Caco-2 (cell line): ENCODE measurements at regions of chr21 and their contacts with region 1.

Region 1: DNA sequence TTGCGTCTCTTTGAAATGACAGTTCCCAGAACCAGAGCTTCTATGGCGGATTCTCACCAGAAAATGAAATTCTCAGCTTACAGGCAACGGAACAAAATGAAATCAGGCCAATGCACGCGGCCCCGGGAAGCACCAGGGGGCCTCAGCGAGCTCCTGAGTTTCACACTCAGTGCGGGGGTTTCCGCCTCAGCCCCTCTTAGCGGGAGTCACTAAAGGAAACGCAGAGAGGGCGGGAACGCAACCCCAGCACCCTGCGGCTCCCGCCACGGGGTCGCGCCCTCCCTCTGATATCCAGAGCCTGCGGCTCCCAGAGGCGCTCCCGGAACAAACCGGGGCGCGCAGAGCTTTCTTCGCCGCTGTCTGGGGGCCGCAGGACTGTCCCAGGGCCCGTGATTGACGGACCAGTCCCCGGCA is 7.9 kb upstream of the COL6A1 start:
- DNase-seq: peak; percentile 69 to 75
- H3K4me3 ChIP-seq: peak overlapping the region; percentile 38
- H3K4me3 Mint-ChIP-seq: peak overlapping the region; percentile 76
- H3K27ac Mint-ChIP-seq: no peak overlapping the region
- H3K4me1 ChIP-seq: peaks cover 10% of the 10 kb centered on the region
- H3K4me1 Mint-ChIP-seq: no peaks in the 10 kb centered on the region
- H3K27me3 ChIP-seq: no peaks in the 10 kb centered on the region; the same call in 1 of the 2 replicates
- H3K27me3 Mint-ChIP-seq: peaks cover 2% of the 10 kb centered on the region
- CTCF ChIP-seq: peak; percentile 69 to 83

Region 2: DNA sequence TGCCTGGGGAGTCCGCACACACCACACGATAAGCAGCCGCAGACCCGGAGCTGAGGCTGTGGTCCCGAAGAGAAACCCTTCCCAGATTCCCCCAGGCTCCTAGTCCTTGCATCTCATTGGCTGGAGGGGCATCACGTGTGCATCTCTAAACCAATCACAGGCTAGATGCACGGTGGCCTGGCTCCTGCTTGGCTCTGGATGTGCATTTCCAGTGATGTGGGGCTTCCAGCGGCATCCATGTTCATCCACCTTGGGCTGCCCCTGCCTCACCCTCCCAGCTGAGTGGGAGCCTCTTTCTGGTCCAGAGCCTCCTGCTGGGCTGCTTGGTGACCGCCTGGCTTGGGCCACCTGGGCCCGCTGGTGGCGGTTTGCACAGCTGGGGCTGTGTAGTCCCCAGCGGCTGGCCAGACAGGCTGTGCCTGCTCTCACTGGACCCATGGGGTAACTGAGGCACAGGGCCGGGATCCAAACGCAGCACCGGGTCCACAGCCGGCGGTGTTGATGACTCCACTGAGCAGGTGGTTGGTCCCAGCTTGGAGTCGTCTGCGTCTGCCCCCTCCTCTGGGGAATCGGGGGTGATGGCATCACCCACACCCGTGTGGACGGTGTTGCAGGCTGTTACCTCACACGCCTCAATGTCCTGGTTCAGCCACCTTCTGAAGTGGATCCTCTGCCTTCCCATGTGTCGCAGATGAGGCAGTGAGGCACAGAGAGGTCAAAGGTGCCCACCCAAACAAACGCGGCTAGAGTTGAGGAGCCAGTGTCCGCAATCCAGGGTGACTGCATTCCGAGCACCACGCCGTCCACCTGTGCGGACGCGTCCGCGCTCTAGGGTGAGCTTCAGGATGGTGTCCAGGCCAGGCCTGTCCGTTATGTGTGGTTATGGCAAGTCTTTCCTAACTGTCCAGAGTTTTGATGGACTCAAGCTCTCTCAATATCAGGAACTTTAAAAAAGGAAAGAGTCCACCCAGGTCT is 49.2 kb after region 1 on chr21:
- CTCF ChIA-PET with region 1: no interaction called
- POLR2A ChIA-PET with region 1: no interaction called
- intact Hi-C with region 1: loop called (anchors 10 kb)
- DNase-seq: peak; percentile 55 to 66
- H3K4me3 ChIP-seq: peak overlapping the region; percentile 24; the same call in 1 of the 2 replicates
- H3K4me3 Mint-ChIP-seq: peak overlapping the region; percentile 64
- H3K27ac Mint-ChIP-seq: peak overlapping the region; percentile 55
- H3K4me1 ChIP-seq: peaks cover 44% of the 10 kb centered on the region
- H3K4me1 Mint-ChIP-seq: peaks cover 32% of the 10 kb centered on the region
- H3K27me3 ChIP-seq: no peaks in the 10 kb centered on the region
- H3K27me3 Mint-ChIP-seq: no peaks in the 10 kb centered on the region
- CTCF ChIP-seq: no peak

Region 3: DNA sequence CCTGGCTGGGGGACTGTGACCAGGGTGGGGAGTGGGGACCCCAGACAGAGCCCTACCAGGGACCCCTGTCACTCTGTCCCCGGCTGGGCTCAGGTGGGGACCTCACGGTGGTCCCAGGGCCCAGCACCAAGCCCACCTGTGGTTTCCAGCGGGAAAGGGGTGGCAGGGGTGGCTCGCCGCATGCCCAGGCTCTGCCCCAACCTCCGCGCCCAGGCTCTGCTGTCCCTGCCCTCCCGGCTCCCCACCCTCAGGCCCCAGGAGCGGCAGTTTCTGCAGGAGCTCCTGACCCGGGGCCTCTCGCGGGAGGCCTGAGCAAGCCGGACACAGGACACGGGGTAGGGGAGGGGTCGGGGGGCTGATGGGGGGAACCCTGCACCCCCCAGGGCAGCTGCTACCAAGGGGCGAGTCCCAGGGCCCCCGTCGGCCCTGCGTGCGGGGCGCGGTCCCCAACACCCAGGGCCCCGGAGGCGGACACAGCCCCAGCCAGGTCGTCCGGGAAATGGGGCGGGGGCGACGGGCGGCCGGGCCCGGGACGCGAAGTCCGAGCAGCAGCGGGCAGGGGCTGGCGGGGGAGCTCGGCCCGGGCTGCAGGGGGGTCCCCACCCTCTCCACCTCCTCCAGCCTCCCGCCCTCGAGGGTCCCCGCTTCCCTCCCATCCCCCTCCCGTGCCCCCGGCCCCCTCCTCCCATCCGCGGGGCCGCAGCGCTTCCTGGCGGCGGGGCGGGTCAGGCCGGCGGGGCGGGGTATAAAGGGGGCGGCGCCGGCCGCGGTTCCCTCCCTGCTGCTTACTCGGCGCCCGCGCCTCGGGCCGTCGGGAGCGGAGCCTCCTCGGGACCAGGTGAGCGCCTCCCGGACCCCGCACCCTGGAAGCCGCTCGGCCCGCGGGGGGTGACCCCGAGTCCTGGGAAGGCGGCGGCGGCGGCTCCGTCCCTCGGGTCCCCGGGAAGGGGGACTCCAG is 123.9 kb after region 1 on chr21 and contains the start of gene COL6A2:
- CTCF ChIA-PET with region 1: interaction called, 3 read pairs
- POLR2A ChIA-PET with region 1: no interaction called
- intact Hi-C with region 1: loop called (anchors 5 kb)
- DNase-seq: peak; percentile 41 to 68
- H3K4me3 ChIP-seq: peak within 1 kb of the TSS; percentile 50
- H3K4me3 Mint-ChIP-seq: peak within 1 kb of the TSS; percentile 43
- H3K27ac Mint-ChIP-seq: no peak within 1 kb of the TSS
- H3K4me1 ChIP-seq: no peaks in the 10 kb centered on the region
- H3K4me1 Mint-ChIP-seq: no peaks in the 10 kb centered on the region
- H3K27me3 ChIP-seq: no peaks in the 10 kb centered on the region; the same call in 1 of the 2 replicates
- H3K27me3 Mint-ChIP-seq: peaks cover 3% of the 10 kb centered on the region
- CTCF ChIP-seq: peak in 1 of 2 experiments; percentile 6
- total RNA-seq, gene COL6A2: 8.8 and 11.1 TPM in 2 replicates

Region 4: DNA sequence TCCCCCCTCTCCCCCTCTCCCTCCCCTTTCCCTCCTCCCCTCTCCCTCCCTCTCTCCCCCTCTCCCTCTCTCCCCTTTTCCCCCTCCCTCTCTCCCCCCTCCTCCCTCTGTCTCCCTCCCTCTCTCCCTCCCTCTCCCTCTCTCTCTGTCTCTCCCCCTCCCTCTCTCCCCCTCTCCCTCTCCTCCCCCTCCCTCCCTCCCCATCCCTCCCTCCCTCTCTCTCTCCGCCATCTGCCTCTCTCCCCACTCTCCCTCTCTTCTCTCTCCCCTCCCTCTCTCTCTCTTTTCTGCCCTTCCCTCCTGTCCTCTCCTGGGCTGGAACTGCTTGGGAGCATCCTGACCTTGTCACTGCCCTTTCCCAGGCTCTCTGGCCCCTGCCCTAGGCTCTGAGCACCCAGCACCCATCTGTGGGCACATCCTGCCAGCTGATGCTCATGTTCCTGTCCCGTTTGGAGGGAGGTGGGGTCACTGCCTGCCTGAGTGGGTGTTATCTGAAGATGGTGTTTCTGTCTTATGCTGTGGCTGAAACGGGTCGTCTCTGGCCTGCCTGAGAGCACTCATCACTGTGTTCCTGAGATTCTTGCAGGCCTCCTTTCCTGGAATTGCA is 170.9 kb after region 1 on chr21:
- CTCF ChIA-PET with region 1: interaction called, 23 read pairs
- POLR2A ChIA-PET with region 1: no interaction called
- intact Hi-C with region 1: loop called (anchors 5 kb)
- DNase-seq: no peak
- H3K4me3 ChIP-seq: no peak overlapping the region
- H3K4me3 Mint-ChIP-seq: peak overlapping the region; percentile 82
- H3K27ac Mint-ChIP-seq: peak overlapping the region; percentile 59
- H3K4me1 ChIP-seq: peaks cover 10% of the 10 kb centered on the region; the same call in 1 of the 2 replicates
- H3K4me1 Mint-ChIP-seq: peaks cover 12% of the 10 kb centered on the region
- H3K27me3 ChIP-seq: no peaks in the 10 kb centered on the region
- H3K27me3 Mint-ChIP-seq: no peaks in the 10 kb centered on the region
- CTCF ChIP-seq: no peak

Region 5: DNA sequence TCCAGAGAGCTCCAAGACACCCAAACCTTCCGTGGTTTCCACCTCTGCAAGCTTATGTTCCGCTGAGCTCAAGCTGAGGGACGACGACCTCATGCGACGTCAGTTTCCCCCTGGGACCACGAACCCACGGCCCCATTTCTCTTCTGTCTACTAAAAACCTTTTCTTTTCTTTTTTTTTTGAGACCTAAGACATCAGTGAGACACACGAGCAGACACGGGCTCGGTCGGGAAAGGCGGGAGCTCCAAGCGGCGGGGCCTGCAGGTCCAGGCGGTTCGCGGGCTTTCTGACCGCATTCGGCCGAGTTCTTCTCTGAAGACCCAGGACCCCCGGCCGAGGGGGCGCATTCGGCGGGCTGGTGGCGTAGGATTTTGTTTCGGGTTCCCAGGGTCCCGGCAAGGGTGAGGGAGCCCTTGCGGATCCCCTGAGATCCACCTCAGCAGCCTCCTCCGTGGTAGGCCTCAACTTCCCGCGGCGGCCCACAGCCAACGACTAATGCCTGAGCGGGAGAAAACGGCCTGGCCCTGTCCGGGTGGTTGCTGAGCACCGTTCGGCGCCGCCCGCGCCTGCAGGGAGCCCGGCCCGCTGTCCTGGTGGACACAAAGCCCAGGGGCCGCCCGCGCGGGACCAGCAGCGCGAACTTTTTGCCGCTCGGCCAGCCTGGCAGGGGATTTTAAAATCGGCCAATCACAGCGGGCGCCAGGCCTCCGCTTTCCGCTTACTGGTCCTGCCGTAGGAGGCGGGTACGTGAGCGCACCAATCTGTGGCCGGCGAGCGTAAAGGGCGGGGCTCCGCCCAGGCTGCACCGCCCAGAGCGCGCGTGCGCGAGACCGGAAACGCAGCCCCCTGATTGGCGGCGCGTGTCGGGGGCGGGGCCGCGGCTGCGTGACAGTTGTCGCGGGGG is 349.8 kb after region 1 on chr21 and contains the start of gene C21orf58:
- CTCF ChIA-PET with region 1: interaction called, 10 read pairs
- POLR2A ChIA-PET with region 1: no interaction called
- intact Hi-C with region 1: no loop called
- DNase-seq: peak; percentile 97 to 98
- H3K4me3 ChIP-seq: peak within 1 kb of the TSS; percentile 81
- H3K4me3 Mint-ChIP-seq: peak within 1 kb of the TSS; percentile 77
- H3K27ac Mint-ChIP-seq: peak within 1 kb of the TSS; percentile 91
- H3K4me1 ChIP-seq: peaks cover 11% of the 10 kb centered on the region
- H3K4me1 Mint-ChIP-seq: peaks cover 15% of the 10 kb centered on the region
- H3K27me3 ChIP-seq: no peaks in the 10 kb centered on the region
- H3K27me3 Mint-ChIP-seq: no peaks in the 10 kb centered on the region
- CTCF ChIP-seq: no peak
- total RNA-seq, gene C21orf58: 17.7 and 18.6 TPM in 2 replicates